ENCODE measurements at regions of chr15 and their contacts with region 1.

Region 1: GRCh38 chr15:89430530-89431341 is 65.6 kb downstream of the RHCG start:
- DNase-seq: peak; percentile 49
- ATAC-seq: peak; percentile 96
- H3K4me3 ChIP-seq: peak overlapping the region; percentile 32 to 73 (median 49); a peak in 5 of 6 replicates
- H3K27ac ChIP-seq: no peak overlapping the region
- H3K4me1 ChIP-seq: peaks cover 8% of the 10 kb centered on the region; the same call in 1 of the 2 replicates
- H3K27me3 ChIP-seq: peaks cover 0 to 16% of the 10 kb centered on the region in 2 experiments; a peak in 1 of 5 replicates
- CTCF ChIP-seq: peak; percentile 99
- EP300 ChIP-seq: no peak
- POLR2A ChIP-seq: no peak
- RAD21 ChIP-seq: peak; percentile 88

Region 2: DNA sequence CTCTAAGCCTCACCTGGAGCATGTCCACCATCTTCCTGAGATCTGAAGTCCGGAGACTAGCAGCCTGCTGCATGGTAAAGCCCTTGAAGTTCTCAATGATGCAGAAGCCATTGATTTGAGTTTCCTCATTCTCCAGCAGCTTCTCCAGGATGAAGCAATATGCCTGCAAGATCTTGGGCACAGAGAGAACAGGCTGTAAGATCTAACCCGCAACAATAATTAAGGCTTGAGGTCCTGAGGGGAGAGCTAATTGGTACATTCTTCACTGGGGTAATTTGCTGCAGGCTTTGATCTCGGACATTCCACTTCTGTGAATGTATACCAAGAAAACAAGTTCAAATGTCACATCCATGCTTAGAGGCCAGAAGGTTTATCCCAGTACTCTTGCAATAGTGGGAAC is 219.0 kb before region 1 on chr15:
- CTCF ChIA-PET with region 1: no interaction called
- POLR2A ChIA-PET with region 1: no interaction called
- in situ Hi-C with region 1: no loop called
- intact Hi-C with region 1: no loop called
- DNase-seq: no peak
- ATAC-seq: no peak
- H3K4me3 ChIP-seq: no peak overlapping the region
- H3K27ac ChIP-seq: no peak overlapping the region
- H3K4me1 ChIP-seq: peaks cover 6% of the 10 kb centered on the region; the same call in 1 of the 2 replicates
- H3K27me3 ChIP-seq: no peaks in the 10 kb centered on the region
- CTCF ChIP-seq: no peak
- EP300 ChIP-seq: no peak
- POLR2A ChIP-seq: no peak
- RAD21 ChIP-seq: no peak

Region 3: DNA sequence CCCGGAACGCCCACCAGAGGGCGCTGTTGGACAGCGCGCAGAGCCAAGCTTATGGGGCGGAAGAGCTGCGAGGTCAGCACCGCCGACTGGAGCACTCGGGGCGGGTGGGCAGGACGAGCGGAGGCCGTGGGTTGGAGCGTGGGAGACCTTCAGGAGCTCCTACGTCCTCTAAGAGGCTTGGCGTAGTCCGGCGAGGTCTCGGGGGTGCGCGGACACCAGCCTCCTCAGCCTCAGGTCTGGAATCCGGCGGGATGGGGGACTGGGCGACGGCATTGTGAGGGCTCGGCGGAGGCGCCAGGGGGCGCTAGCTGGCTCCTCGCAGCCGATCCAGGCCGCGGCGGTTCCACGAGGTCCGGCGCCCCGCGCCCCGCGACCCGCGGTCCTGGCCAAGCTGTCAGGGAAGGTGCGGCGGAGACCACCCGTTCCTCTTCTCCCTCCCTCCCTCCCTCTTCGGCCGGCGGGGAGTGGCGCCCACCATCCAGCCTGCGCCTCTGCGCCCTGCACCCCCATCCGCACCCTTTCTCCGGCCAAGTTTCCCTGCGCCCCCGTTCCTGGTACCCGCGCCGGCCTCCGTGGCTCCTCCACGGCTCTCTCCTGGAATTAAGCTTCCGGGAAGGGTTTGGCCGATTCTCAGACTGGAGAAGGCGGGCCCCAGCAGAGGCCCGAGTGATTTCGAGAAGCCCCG is 71.8 kb before region 1 on chr15:
- CTCF ChIA-PET with region 1: interaction called, 45 read pairs
- POLR2A ChIA-PET with region 1: no interaction called
- in situ Hi-C with region 1: loop called (anchors 5 kb)
- intact Hi-C with region 1: loop called (anchors 1 kb)
- DNase-seq: peak; percentile 41
- ATAC-seq: peak; percentile 87
- H3K4me3 ChIP-seq: peak overlapping the region; percentile 38 to 72 (median 46); a peak in 4 of 6 replicates
- H3K27ac ChIP-seq: no peak overlapping the region
- H3K4me1 ChIP-seq: peaks cover 7% of the 10 kb centered on the region
- H3K27me3 ChIP-seq: peaks cover 6 to 74% of the 10 kb centered on the region in 2 experiments
- CTCF ChIP-seq: peak; percentile 97
- EP300 ChIP-seq: no peak
- POLR2A ChIP-seq: no peak
- RAD21 ChIP-seq: peak; percentile 91

Region 4: GRCh38 chr15:89416141-89416853 is 14.4 kb before region 1 on chr15:
- CTCF ChIA-PET with region 1: interaction called, 20 read pairs
- POLR2A ChIA-PET with region 1: no interaction called
- in situ Hi-C with region 1: no loop called
- intact Hi-C with region 1: loop called (anchors 2 kb)
- DNase-seq: peak; percentile 66
- ATAC-seq: peak; percentile 82
- H3K4me3 ChIP-seq: no peak overlapping the region
- H3K27ac ChIP-seq: no peak overlapping the region
- H3K4me1 ChIP-seq: no peaks in the 10 kb centered on the region
- H3K27me3 ChIP-seq: peaks cover 2 to 30% of the 10 kb centered on the region in 2 experiments; a peak in 4 of 5 replicates
- CTCF ChIP-seq: peak; percentile 86
- EP300 ChIP-seq: no peak
- POLR2A ChIP-seq: no peak
- RAD21 ChIP-seq: peak; percentile 61

Region 5: DNA sequence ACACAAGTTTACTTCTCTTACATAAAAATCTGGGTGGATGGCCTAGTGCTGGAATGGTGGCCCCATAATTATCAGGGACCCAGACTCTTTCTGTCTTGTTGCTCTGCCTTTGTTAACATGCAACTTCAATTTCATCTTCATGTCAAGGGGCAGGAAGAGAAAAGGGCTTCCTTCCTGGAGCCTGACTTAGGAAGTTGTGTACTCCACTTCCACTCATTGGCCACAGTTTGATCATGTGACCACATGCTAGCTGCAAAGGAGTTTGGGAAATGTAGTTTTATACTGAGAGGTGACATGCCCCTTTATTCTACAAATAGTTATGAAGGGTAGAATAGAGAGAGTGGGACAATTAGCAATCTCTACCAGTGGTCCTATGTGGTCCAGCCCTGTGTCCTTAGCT is 26.4 kb after region 1 on chr15:
- CTCF ChIA-PET with region 1: no interaction called
- POLR2A ChIA-PET with region 1: no interaction called
- in situ Hi-C with region 1: no loop called
- intact Hi-C with region 1: no loop called
- DNase-seq: peak; percentile 12
- ATAC-seq: no peak
- H3K4me3 ChIP-seq: no peak overlapping the region
- H3K27ac ChIP-seq: no peak overlapping the region
- H3K4me1 ChIP-seq: peaks cover 74% of the 10 kb centered on the region
- H3K27me3 ChIP-seq: peaks cover 0 to 4% of the 10 kb centered on the region in 2 experiments; a peak in 2 of 5 replicates
- CTCF ChIP-seq: no peak
- EP300 ChIP-seq: no peak
- POLR2A ChIP-seq: no peak
- RAD21 ChIP-seq: no peak